GM10248 (cell line): ENCODE measurements at regions of chrX and their contacts with region 1.

Region 1: DNA sequence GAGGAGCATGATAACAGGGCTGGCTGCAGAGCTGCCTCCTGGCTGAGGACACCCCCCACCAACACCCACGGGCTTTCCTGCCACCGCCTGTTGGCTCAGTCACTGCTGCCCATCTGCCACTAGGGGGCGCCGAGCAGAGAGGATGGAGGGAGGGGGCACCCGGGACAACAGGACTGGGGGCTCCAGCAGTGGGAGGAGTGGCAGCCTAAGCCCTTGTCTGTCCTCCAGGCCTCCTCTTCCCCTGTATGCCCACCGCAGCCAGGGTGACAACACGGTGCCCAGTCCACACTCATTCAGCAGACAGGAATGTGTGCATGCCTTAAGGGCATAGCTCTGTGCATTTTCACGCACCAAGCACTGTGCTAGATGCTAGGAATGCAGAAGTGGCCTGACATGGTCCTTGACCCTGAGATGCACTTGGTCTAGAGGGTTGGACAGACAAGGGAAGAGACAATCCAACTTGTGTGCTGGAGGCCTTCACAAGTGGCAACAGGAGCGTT is 149.9 kb downstream of the AMMECR1 start:
- DNase-seq: peak; percentile 47
- CTCF ChIP-seq: peak; percentile 52

Region 2: DNA sequence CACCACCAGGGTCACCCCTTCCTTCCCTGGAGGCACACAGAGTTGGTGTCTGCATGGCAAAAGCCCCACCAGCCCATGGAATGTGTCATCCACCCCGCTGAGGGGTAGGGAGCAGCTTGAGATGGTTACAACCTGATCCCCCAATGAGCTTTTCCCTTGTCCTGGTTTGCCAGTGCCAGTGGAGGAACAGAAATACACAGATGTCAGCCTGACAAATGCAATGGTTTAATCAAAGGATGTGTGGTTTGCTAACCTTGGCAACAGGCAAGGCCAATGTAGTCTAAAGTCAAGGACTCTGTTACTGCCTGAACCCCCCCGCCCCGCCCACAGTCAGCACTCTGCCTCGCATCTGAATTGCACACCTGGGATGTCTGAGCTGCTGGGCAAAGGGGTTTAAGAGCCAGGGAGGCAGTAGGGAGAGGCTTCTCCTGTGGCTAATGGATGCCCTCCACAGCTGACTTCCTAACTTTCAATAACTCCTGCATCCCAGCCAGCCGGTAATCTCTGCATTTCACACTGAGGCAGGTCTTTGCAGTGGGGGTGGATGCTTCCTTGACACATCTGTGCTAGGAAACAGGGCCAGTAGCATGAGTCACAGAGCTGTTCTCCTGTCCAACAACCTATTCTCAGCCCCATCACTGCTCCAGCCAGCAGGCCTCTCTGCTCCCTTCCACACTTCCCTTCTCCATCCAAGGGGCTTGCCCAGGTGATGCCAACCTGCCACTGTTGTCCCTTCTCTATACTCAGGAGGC is 12.3 kb after region 1 on chrX:
- CTCF ChIA-PET with region 1: interaction called, 21 read pairs
- POLR2A ChIA-PET with region 1: no interaction called
- DNase-seq: no peak
- CTCF ChIP-seq: no peak

Region 3: DNA sequence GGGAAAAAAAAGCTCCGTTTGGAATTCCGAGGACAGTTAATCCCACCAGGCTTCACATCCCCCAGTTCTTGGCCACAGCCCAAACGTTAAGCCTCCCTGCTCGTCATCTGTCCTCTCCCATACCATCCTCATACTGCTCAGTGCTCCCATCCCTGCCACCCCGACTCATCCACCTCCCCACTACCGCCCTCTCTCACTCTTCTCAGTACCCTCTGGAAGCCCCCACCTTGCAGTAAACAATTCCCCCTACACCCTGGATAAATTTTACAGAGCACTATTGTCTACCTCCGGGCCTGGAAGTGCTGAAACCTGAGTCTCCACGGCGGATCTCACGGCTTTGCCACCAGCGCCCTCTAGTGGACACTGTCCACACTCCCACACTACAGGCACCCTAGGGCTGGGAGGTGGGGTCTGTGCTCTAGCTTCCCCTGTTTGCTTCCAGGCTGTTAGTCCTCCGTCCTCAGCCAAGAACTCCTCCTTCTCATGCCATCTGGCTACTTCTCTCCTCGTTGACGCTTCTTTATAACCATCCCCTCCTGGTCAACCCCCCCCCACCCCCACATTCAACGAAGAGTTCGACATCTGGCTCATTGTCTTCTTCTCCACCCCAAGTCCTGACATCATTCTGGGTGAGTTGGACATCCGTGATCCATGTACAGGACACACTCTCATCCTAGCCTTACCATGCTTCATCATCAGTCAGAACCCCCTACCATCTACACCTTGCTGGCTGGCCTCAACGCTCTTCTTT is 245.1 kb after region 1 on chrX:
- CTCF ChIA-PET with region 1: interaction called, 450 read pairs
- POLR2A ChIA-PET with region 1: no interaction called
- DNase-seq: peak; percentile 59
- CTCF ChIP-seq: peak; percentile 77